ENCODE measurements at regions of chr16 and their contacts with region 1.

Region 1: DNA sequence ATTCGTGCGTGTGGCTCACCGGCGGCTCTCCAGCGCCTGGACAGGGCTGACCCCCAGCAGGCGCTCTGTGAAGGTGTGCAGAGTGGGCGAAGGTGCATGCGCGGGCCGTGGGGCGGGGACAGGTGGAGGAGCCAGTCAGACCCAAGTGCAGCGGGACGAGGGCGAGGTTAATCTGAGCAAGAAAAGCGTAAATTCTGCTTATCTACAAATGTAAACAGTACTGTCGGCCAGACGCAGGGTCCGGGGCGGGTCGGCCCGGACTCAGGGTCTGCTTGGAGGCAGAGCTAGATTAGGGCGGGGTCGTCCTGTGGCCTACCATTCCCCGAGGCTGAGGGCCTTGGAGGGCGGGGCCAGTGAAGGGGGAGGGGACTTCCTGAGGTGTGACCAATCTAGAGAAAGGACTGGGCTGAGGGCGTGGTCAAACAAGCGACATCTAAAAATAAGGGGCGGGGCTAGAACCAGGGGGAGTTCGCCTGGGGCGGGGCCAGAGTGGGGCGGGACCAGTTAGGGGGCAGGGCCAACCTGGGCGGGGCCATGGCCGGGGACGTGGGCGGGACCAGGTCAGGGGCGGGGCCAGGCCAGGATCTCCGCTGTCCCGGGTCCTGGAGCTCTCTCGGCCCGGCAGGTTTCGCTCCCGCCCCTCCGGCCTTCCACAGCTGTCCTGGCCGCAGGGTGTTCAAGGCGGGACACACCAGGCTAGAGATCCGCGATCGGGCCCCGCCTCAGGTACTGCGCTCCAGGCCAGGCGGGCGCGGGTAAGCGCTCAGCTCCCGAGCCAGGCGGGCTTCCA is at the start of gene SEC14L5:
- DNase-seq: peak; percentile 88 to 99
- H3K4me3 ChIP-seq: peak within 1 kb of the TSS; percentile 69
- H3K27ac ChIP-seq: peak within 1 kb of the TSS; percentile 17; the same call in 1 of the 2 replicates
- H3K4me1 ChIP-seq: peaks cover 10% of the 10 kb centered on the region
- H3K27me3 ChIP-seq: peaks cover 26% of the 10 kb centered on the region
- CTCF ChIP-seq: no peak
- total RNA-seq, gene SEC14L5: 1.1 and 1.8 TPM in 2 replicates

Region 2: GRCh38 chr16:4616047-4616811 is 341.7 kb before region 1 on chr16:
- CTCF ChIA-PET with region 1: no interaction called
- POLR2A ChIA-PET with region 1: no interaction called
- intact Hi-C with region 1: loop called (anchors 5 kb)
- DNase-seq: peak; percentile 98 to 99
- H3K4me3 ChIP-seq: peak overlapping the region; percentile 88
- H3K27ac ChIP-seq: peak overlapping the region; percentile 89
- H3K4me1 ChIP-seq: peaks cover 42% of the 10 kb centered on the region
- H3K27me3 ChIP-seq: no peaks in the 10 kb centered on the region
- CTCF ChIP-seq: no peak; the same call in 1 of the 2 replicates

Region 3: GRCh38 chr16:4766874-4767628 is 190.9 kb before region 1 on chr16 and contains the start of gene ZNF500:
- CTCF ChIA-PET with region 1: no interaction called
- POLR2A ChIA-PET with region 1: no interaction called
- intact Hi-C with region 1: loop called (anchors 5 kb)
- DNase-seq: peak; percentile 89 to 99
- H3K4me3 ChIP-seq: peak within 1 kb of the TSS; percentile 70
- H3K27ac ChIP-seq: peak within 1 kb of the TSS; percentile 68
- H3K4me1 ChIP-seq: peaks cover 10% of the 10 kb centered on the region
- H3K27me3 ChIP-seq: no peaks in the 10 kb centered on the region
- CTCF ChIP-seq: no peak
- total RNA-seq, gene ZNF500: 28.8 and 29.2 TPM in 2 replicates

Region 4: GRCh38 chr16:4882633-4883285 is 75.2 kb before region 1 on chr16:
- CTCF ChIA-PET with region 1: interaction called, 6 read pairs
- POLR2A ChIA-PET with region 1: no interaction called
- intact Hi-C with region 1: loop called (anchors 2 kb)
- DNase-seq: peak; percentile 93
- H3K4me3 ChIP-seq: no peak overlapping the region
- H3K27ac ChIP-seq: peak overlapping the region; percentile 53
- H3K4me1 ChIP-seq: peaks cover 27% of the 10 kb centered on the region
- H3K27me3 ChIP-seq: no peaks in the 10 kb centered on the region
- CTCF ChIP-seq: no peak

Region 5: DNA sequence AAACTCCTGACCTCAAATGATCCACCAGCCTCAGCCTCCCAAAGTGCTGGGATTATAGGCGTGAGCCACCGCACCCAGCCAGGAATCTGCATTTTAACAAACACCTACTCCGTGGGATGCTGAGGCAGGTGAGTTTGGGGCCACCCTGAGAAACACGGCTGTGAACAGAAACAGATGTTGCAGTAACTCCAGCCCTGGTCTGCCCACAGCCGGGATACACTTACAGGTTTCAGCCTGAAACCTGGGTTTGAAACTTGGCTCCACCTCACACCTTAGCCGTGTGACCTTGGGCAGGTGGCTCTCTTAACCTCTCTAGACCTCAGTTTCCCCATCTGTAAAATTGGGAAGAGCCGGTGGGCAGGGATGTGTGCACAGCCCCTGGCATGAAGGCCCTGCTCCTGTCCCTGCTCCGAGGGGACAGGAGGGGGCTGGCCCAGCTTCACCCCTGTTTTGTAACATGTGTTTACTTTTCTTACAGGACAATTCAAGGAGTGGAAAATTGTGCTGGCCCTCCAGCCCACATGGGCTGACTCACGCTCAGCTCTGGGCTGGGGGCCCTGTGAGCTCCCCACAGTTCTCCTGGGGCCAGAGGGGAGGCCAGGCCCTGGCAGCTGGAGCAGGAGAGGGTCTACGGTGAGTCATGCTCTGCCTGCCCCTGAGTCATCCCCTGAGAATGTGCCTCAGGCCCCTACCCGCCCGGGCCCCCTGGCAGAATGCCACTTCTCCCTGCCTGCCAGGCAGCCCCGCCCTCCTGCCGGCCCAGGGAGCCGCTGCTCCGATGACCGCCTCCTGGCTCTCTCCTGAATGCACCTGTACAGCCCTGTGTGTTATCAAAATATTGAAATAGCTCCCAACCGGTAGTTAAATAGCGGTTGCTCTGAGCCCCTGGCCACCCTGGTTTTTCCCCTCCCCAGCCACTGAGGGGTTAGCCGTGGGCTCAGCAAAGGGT is 13.3 kb before region 1 on chr16:
- CTCF ChIA-PET with region 1: interaction called, 9 read pairs
- POLR2A ChIA-PET with region 1: interaction called, 3 read pairs
- intact Hi-C with region 1: loop called (anchors 1 kb)
- DNase-seq: peak; percentile 97 to 100
- H3K4me3 ChIP-seq: 0 out of 2 replicates have a peak overlapping the region, but pooled peaks have one; percentile 23
- H3K27ac ChIP-seq: peak overlapping the region; percentile 96
- H3K4me1 ChIP-seq: peaks cover 78% of the 10 kb centered on the region
- H3K27me3 ChIP-seq: no peaks in the 10 kb centered on the region
- CTCF ChIP-seq: no peak

Region 6: GRCh38 chr16:5010576-5011329 is 52.8 kb after region 1 on chr16:
- CTCF ChIA-PET with region 1: no interaction called
- POLR2A ChIA-PET with region 1: no interaction called
- intact Hi-C with region 1: no loop called
- DNase-seq: no peak
- H3K4me3 ChIP-seq: no peak overlapping the region
- H3K27ac ChIP-seq: no peak overlapping the region
- H3K4me1 ChIP-seq: no peaks in the 10 kb centered on the region
- H3K27me3 ChIP-seq: peaks cover 77% of the 10 kb centered on the region
- CTCF ChIP-seq: no peak

Measured in PC-9 (cell line).